ENCODE measurements at regions of chr18 and their contacts with region 1.

Region 1: GRCh38 chr18:12890506-12890905 is 6.5 kb upstream of the PTPN2 start:
- DNase-seq: no peak
- ATAC-seq: peak in 3 of 4 donors; percentile 37 to 51 (median 48)
- H3K4me3 ChIP-seq: no peak overlapping the region
- H3K27ac ChIP-seq: no peak overlapping the region
- H3K4me1 ChIP-seq: no peaks in the 10 kb centered on the region
- H3K27me3 ChIP-seq: no peaks in the 10 kb centered on the region
- CTCF ChIP-seq: peak in 1 of 4 donors; percentile 9
- POLR2A ChIP-seq: no peak

Region 2: DNA sequence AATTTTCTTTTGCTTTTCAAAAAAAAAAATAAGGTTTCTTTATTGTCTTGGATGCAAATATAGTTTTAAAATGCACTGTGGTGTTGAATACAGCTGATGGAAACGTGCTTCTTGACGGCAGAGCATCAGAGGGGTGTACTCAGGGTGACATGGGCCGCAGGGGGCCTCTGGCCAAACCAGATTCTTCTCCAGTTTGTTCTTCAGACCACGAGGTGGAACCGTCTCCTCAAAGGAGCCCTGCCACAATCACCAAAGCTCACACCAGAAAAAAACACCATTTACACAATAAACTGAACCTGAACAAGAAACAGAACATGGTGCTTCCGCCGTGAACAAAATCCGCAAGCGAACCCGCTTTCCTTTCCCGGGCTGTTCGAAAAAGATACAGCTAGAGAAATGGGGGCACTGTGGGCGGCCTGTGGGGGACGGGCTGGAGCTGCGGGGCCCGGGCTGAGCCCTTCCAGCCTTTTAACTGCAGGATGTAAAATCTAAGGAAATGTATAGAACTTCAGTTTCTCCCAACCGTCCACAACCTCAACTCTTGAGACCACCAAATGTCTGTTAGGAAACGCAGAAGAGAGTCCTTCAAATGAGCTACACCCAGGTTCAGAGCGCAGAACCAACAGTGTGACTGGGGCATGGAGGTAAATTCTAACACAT is 153.1 kb before region 1 on chr18:
- intact Hi-C with region 1: loop called in 1 of 2 experiments (anchors 5 kb)
- DNase-seq: no peak
- ATAC-seq: no peak
- H3K4me3 ChIP-seq: no peak overlapping the region
- H3K27ac ChIP-seq: no peak overlapping the region
- H3K4me1 ChIP-seq: no peaks in the 10 kb centered on the region
- H3K27me3 ChIP-seq: no peaks in the 10 kb centered on the region
- CTCF ChIP-seq: no peak
- POLR2A ChIP-seq: no peak

Region 3: GRCh38 chr18:12973562-12974213 is 83.2 kb after region 1 on chr18:
- intact Hi-C with region 1: no loop called
- DNase-seq: no peak
- ATAC-seq: no peak
- H3K4me3 ChIP-seq: no peak overlapping the region
- H3K27ac ChIP-seq: no peak overlapping the region
- H3K4me1 ChIP-seq: no peaks in the 10 kb centered on the region
- H3K27me3 ChIP-seq: no peaks in the 10 kb centered on the region
- CTCF ChIP-seq: no peak
- POLR2A ChIP-seq: no peak

Measured in right lobe of liver (tissue), 6 donors.